Heart right ventricle (tissue), 16 donors: ENCODE measurements at regions of chr11 and their contacts with region 1.

Region 1: DNA sequence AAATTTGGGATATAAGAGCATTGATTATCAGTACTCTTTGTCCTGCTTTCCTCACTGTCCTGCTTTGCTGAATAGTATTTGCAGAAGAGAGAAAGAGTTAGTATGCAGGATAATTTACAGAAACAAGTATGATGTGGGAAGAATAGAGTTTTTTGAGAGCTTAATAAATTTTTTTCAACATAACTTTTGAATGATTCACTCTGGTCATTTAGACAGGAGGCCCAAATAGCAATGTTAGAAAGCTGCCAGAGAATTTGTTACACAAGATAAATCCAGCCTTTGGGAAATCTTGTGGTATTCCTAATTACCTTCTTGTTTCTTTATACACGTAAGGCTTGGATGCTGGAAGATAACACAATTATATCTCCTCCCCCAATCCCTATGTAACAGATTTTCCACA is 484.6 kb downstream of the CNTN5 start:
- DNase-seq: no peak
- ATAC-seq: peak in 2 of 8 donors; percentile 12 to 21
- H3K4me3 ChIP-seq: no peak overlapping the region
- H3K27ac ChIP-seq: no peak overlapping the region
- H3K4me1 ChIP-seq: no peaks in the 10 kb centered on the region
- H3K27me3 ChIP-seq: no peaks in the 10 kb centered on the region
- CTCF ChIP-seq: no peak

Region 2: DNA sequence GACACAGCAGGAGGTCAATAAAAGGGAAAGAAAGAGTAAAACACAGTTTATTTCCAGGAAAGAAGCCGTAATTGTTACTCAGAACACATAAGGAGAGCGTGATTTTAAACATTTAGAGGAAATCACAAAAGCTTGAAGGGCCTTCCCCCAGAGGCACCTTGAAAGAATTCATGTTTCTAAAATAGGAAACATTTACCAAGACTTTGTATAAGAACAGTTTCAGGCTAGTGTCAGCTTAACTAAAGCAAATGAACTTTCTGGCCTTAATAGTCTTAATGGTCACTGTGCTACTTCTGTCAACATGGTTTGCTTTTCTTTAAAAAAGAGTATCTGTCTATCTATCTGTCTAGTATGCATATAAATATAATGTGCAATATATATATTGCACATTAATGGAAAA is 275.8 kb before region 1 on chr11:
- intact Hi-C with region 1: no loop called
- DNase-seq: no peak
- ATAC-seq: no peak
- H3K4me3 ChIP-seq: no peak overlapping the region
- H3K27ac ChIP-seq: no peak overlapping the region
- H3K4me1 ChIP-seq: no peaks in the 10 kb centered on the region
- H3K27me3 ChIP-seq: no peaks in the 10 kb centered on the region
- CTCF ChIP-seq: no peak

Region 3: DNA sequence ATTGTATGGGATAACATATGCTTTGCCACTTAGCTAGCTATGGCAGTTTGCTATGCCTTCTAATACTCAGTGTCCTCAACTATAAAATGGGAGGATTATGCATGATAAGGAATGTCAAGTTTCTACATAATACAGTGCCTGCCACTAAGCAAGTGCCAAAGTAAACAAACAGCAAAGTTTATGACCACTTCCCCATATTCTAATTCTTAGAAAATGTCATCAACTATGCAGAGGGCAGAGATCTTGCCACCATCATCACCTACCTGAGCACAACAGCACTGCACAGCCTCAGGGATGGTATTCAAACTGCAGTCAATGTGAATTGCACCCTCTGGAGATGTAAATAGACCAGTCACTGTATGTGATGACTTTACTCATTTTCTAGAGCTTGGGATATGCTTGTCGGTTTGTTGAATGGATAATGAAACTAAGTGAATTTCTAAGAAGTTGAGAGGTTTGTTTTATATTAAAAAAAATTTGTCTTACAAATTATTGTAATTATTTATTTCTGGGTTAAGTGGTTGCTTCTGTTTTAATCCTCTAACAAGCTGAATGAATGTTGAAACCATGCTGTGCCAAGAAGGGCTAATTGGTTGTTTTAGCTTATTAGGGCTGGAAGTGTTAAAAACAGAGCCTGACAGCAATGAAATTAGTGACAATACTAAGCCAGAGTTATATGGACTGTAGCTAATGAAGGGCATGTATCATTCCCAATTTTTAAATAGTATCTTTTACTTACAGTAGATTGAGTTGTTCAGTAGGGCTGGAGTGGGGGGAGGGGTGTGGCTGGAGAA is 86.2 kb before region 1 on chr11:
- intact Hi-C with region 1: no loop called
- DNase-seq: no peak
- ATAC-seq: no peak
- H3K4me3 ChIP-seq: no peak overlapping the region
- H3K27ac ChIP-seq: no peak overlapping the region
- H3K4me1 ChIP-seq: peaks cover 0 to 4% (median 0%) of the 10 kb centered on the region in 9 donors
- H3K27me3 ChIP-seq: no peaks in the 10 kb centered on the region
- CTCF ChIP-seq: no peak

Region 4: GRCh38 chr11:99443276-99443675 is 62.0 kb before region 1 on chr11:
- intact Hi-C with region 1: loop called in 1 of 10 experiments (anchors 10 kb)
- DNase-seq: no peak
- ATAC-seq: no peak
- H3K4me3 ChIP-seq: no peak overlapping the region
- H3K27ac ChIP-seq: no peak overlapping the region
- H3K4me1 ChIP-seq: no peaks in the 10 kb centered on the region
- H3K27me3 ChIP-seq: no peaks in the 10 kb centered on the region
- CTCF ChIP-seq: no peak

Region 5: DNA sequence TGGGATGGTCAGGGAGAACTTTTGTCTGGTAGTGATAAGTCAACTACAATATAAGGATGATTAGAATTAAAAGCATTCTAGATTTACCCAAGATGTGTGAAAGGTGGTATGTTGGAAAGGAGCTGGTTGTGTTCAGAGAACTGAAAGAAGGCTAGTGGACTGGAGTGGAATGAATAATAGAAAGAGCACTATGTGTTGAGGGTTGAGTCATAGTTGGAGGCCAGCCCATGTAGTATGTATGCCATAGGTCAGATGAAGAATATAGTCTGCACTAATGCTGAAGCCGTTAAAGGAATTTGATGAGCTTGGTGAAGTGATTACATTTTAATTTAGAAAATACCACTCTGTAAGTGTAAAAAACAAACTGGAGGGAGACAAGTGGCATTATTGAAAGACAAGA is 29.5 kb after region 1 on chr11:
- intact Hi-C with region 1: no loop called
- DNase-seq: no peak
- ATAC-seq: no peak
- H3K4me3 ChIP-seq: no peak overlapping the region
- H3K27ac ChIP-seq: no peak overlapping the region
- H3K4me1 ChIP-seq: no peaks in the 10 kb centered on the region
- H3K27me3 ChIP-seq: no peaks in the 10 kb centered on the region
- CTCF ChIP-seq: no peak